ENCODE measurements at regions of chr6 and their contacts with region 1.

Region 1: GRCh38 chr6:30717042-30717844 is at the start of gene MDC1:
- DNase-seq: peak; percentile 97 to 100 (median 99)
- H3K4me3 ChIP-seq: peak within 1 kb of the TSS; percentile 85
- H3K4me3 Mint-ChIP-seq: peak within 1 kb of the TSS; percentile 90 to 98 (median 94)
- H3K27ac ChIP-seq: peak within 1 kb of the TSS; percentile 92
- H3K27ac Mint-ChIP-seq: peak within 1 kb of the TSS; percentile 92 to 100 (median 99)
- H3K4me1 ChIP-seq: peaks cover 20% of the 10 kb centered on the region
- H3K4me1 Mint-ChIP-seq: peaks cover 45 to 64% (median 46%) of the 10 kb centered on the region in 3 donors
- H3K27me3 ChIP-seq: no peaks in the 10 kb centered on the region
- H3K27me3 Mint-ChIP-seq: peaks cover 0 to 2% of the 10 kb centered on the region in 2 donors
- total RNA-seq, gene MDC1: 59.4 to 71.1 TPM

Region 2: GRCh38 chr6:30672445-30673253 is 44.6 kb before region 1 on chr6 and contains the start of gene DHX16:
- CTCF ChIA-PET with region 1: interaction called, 697 read pairs
- POLR2A ChIA-PET with region 1: interaction called, 5 read pairs
- DNase-seq: peak; percentile 82 to 92 (median 84)
- H3K4me3 ChIP-seq: peak within 1 kb of the TSS; percentile 80
- H3K4me3 Mint-ChIP-seq: peak within 1 kb of the TSS; percentile 77 to 97 (median 89)
- H3K27ac ChIP-seq: peak within 1 kb of the TSS; percentile 67
- H3K27ac Mint-ChIP-seq: peak within 1 kb of the TSS; percentile 74 to 92 (median 86)
- H3K4me1 ChIP-seq: peaks cover 18% of the 10 kb centered on the region
- H3K4me1 Mint-ChIP-seq: peaks cover 30 to 42% (median 40%) of the 10 kb centered on the region in 3 donors
- H3K27me3 ChIP-seq: no peaks in the 10 kb centered on the region
- H3K27me3 Mint-ChIP-seq: no peaks in the 10 kb centered on the region
- total RNA-seq, gene DHX16: 47.5 to 49.1 TPM

Region 3: DNA sequence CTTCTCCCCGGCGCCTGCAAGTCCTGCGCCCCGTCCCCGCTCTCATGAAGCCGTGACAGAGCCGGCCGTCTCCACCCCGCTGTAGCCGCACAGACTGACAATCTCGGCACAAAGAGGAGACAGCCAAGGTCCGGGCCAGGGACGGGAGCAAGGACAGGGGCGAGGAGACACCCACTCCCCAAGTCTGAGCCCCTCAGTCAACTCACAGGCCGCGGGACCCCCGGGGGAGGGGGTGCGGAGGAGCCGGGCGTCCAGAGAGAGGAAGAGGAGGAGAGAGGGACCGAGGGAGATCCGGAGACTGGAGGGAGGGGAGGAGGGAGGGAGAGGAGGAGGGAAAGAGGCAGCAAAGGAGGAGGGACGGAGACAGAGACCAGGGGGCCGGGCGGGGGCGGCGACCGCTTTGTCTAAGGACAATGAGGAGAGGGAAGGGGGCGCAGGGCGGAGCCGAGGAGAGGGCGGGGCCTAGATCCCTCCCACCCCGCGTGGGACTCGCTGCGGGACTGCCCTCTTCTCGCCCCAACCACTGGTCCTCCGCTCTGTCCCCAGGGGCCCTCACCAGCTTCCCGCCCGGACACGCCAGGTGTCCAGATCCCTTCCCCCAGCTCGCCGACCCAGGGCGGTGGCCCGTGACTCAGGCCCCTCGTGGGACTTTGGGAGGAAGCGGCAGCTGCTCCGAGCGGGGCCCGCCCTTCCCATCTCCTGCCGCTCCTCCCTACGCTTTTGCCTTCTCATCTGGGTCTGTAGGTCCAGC is 30.2 kb before region 1 on chr6:
- CTCF ChIA-PET with region 1: interaction called, 697 read pairs
- POLR2A ChIA-PET with region 1: interaction called, 142 read pairs
- DNase-seq: peak; percentile 48 to 83 (median 72)
- H3K4me3 ChIP-seq: peak overlapping the region; percentile 92
- H3K4me3 Mint-ChIP-seq: peak overlapping the region; percentile 95 to 100 (median 99)
- H3K27ac ChIP-seq: peak overlapping the region; percentile 90
- H3K27ac Mint-ChIP-seq: peak overlapping the region; percentile 91 to 99 (median 95)
- H3K4me1 ChIP-seq: peaks cover 38% of the 10 kb centered on the region
- H3K4me1 Mint-ChIP-seq: peaks cover 41 to 59% (median 43%) of the 10 kb centered on the region in 3 donors
- H3K27me3 ChIP-seq: no peaks in the 10 kb centered on the region
- H3K27me3 Mint-ChIP-seq: no peaks in the 10 kb centered on the region

Region 4: DNA sequence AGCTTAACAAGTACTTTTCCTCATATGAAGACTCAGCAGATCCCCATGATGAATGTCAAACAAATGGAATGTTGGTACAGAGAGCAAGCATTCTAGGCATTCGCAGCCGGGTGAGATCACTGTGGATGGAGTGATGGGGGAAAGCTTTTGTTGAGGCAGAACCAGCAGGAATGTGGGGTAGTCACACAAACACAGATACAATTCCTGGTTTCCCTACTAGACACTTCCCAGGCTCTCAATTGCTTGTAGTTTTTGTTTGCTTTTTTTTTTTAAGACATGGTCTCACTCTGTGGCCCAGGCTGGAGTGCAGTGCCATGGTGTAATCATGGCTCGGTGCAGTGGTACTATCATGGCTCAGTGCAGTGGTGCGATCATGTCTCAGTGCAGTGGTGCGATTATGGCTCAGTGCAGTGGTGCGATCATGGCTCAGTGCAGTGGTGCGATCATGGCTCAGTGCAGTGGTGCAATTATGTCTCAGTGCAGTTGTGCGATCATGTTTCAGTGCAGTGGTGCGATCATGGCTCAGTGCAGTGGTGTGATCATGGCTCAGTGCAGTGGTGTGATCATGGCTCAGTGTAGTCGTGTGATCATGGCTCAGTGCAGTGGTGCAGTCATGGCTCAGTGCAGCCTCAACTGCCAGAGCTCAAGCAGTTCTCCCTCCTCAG is 42.5 kb after region 1 on chr6:
- CTCF ChIA-PET with region 1: no interaction called
- POLR2A ChIA-PET with region 1: no interaction called
- DNase-seq: no peak
- H3K4me3 ChIP-seq: no peak overlapping the region
- H3K4me3 Mint-ChIP-seq: no peak overlapping the region
- H3K27ac ChIP-seq: no peak overlapping the region
- H3K27ac Mint-ChIP-seq: no peak overlapping the region
- H3K4me1 ChIP-seq: peaks cover 12% of the 10 kb centered on the region
- H3K4me1 Mint-ChIP-seq: peaks cover 13 to 21% (median 19%) of the 10 kb centered on the region in 3 donors
- H3K27me3 ChIP-seq: no peaks in the 10 kb centered on the region
- H3K27me3 Mint-ChIP-seq: peaks cover 0 to 3% of the 10 kb centered on the region in 2 donors